CD14-positive monocyte (primary cell): ENCODE measurements at regions of chr17 and their contacts with region 1.

Region 1: DNA sequence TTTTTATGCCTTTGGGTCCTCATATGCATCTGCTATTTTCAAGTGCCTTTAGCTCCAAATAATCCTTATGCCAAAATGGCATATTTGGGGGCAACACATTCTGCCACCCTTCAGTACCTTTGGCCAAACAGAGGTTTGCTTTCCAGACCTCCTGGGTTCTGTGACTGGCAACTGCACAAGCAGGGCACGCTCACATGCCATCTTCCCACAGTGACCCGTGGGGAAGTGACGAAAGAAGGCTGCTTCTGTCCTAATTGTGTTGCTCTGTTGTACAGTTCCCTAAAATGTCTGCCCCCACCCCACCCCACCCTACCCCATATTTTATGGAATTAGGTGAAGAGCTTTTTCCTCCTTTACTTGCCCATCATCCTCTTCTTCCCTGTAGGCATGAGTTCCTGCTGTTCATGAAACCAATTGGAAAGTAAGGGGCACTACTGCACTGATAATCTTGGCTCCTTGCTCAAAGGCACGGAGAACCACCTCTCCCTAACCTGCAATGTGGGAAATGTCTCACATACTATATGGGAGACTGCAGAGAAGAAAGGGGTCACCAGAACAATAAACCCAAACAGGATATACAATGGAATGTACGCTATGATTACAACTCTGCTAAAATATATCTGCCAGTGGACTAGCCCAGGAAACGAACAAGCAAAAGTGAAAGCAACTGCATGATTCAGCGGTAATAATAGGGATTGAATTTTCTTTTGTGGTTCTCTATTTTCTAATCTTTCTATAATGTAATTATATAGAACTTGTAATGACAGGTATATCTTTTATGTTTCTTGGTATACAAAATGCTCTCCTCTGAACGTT is 3.3 kb upstream of the SLFN12L start:
- DNase-seq: peak; percentile 89 to 94 (median 94)
- H3K4me3 ChIP-seq: peak overlapping the region; percentile 83 to 100 (median 89)
- H3K4me3 Mint-ChIP-seq: peak overlapping the region; percentile 81 to 93
- H3K27ac ChIP-seq: peak overlapping the region; percentile 76 to 100
- H3K27ac Mint-ChIP-seq: peak overlapping the region; percentile 98 to 99 (median 99)
- H3K4me1 ChIP-seq: peaks cover 18 to 31% of the 10 kb centered on the region in 2 donors
- H3K4me1 Mint-ChIP-seq: peaks cover 35% of the 10 kb centered on the region
- H3K27me3 ChIP-seq: no peaks in the 10 kb centered on the region
- H3K27me3 Mint-ChIP-seq: peaks cover 0 to 1% (median 0%) of the 10 kb centered on the region in 3 donors
- CTCF ChIP-seq: no peak

Region 2: DNA sequence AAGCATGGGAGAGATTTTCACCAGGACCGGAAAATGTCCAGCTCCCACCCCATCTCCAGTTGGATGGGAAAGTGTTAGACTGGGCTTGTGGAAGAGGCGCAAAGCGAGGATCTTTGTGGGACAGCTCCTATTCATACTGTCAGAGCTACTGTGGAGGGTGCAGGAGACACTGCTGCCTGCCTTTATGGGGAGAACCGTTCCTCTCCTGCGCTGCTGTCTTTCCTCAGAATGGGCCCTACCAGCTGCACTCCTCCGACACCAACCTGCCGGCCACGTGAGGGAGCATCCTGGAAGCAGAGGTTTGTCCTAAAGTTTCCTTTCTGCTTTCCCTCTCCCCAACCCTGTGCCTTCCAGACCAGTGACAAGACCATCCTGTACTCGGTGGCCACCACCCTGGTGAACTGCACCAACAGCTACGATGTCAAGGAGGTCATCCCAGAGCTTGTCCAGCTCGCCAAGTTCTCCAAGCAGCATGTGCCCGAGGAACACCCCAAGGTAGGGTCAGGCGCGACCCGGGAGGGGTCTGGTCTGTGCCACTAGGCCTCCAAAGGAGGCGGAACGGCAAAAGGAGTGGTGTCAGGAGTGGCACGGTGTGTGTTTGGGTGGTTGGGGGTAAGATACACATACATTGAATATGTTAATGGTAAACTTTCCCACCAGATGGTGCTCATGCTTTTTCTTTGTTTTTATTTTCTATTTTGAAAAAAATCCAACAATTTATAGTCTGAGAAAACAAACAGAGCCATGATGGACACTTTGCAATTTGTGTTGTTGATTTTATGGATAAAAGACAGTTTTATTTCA is 369.6 kb before region 1 on chr17:
- intact Hi-C with region 1: loop called in 1 of 2 experiments (anchors 5 kb)
- DNase-seq: no peak
- H3K4me3 ChIP-seq: no peak overlapping the region
- H3K4me3 Mint-ChIP-seq: no peak overlapping the region
- H3K27ac ChIP-seq: no peak overlapping the region
- H3K27ac Mint-ChIP-seq: peak overlapping the region in 1 of 7 donors; percentile 44
- H3K4me1 ChIP-seq: no peaks in the 10 kb centered on the region
- H3K4me1 Mint-ChIP-seq: peaks cover 3% of the 10 kb centered on the region
- H3K27me3 ChIP-seq: no peaks in the 10 kb centered on the region
- H3K27me3 Mint-ChIP-seq: peaks cover 1 to 4% (median 4%) of the 10 kb centered on the region in 3 donors
- CTCF ChIP-seq: peak; percentile 36

Region 3: GRCh38 chr17:35242805-35243560 is 297.8 kb before region 1 on chr17 and contains the start of gene SLFN5:
- intact Hi-C with region 1: loop called in 1 of 2 experiments (anchors 5 kb)
- DNase-seq: peak; percentile 89 to 94 (median 92)
- H3K4me3 ChIP-seq: peak within 1 kb of the TSS; percentile 77 to 94 (median 86)
- H3K4me3 Mint-ChIP-seq: peak within 1 kb of the TSS; percentile 95 to 97
- H3K27ac ChIP-seq: peak within 1 kb of the TSS; percentile 94 to 97
- H3K27ac Mint-ChIP-seq: peak within 1 kb of the TSS; percentile 95 to 99 (median 97)
- H3K4me1 ChIP-seq: peaks cover 30 to 46% of the 10 kb centered on the region in 2 donors
- H3K4me1 Mint-ChIP-seq: peaks cover 41% of the 10 kb centered on the region
- H3K27me3 ChIP-seq: no peaks in the 10 kb centered on the region
- H3K27me3 Mint-ChIP-seq: peaks cover 11 to 15% (median 12%) of the 10 kb centered on the region in 3 donors
- CTCF ChIP-seq: no peak
- polyA plus RNA-seq, gene SLFN5: 2.9 to 8.8 (median 5.3) TPM

Region 4: DNA sequence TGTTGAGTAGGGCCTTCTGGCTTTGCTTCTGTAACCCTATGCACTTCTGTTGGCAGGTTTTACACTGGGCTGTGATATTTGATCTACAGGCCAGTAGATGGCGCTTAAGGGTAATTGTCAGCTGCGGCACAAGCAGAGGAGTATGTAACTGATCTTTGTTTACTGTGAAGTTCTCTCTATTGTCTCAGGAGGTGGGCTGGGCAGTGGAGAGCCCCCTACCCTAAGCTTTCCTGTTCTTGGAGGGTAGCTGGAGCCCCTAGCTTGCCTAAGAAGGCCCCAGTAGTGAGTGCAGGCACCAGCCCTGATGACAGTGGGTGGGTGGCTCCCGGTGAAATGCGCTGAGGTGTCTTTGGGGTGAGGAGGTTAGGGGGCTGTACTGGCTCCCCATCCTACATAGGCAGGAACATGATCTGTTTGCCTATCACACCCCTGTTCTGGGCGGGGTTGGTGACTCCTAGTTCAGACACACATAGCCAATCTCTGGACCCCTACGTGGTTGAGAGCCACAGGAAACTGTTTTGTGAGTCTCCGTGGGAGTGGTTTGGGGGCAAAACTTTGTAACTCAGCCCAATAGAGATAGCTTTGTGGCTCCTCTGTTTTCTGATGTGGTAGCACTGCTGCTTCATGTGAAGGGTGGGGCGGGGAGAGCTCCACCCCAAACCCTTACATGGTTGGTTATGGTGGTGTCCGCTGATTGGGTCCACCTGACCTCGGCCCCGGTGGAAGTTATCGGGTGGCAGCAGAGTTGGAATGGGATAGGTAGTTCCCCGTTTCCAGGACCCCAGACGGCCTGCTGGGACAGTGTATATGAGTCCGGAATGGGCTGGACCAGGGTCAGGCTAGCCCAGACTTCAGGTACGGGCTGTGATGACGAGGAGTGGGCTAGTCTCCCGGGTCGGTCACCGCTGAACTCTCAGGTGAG is 227.7 kb before region 1 on chr17:
- intact Hi-C with region 1: loop called (anchors 2 to 5 kb)
- DNase-seq: peak; percentile 66 to 77 (median 71)
- H3K4me3 ChIP-seq: peak overlapping the region; percentile 48 to 85 (median 56)
- H3K4me3 Mint-ChIP-seq: peak overlapping the region; percentile 93 to 95
- H3K27ac ChIP-seq: peak overlapping the region in 1 of 2 donors; percentile 86
- H3K27ac Mint-ChIP-seq: peak overlapping the region; percentile 43 to 92 (median 83)
- H3K4me1 ChIP-seq: peaks cover 18 to 26% of the 10 kb centered on the region in 2 donors
- H3K4me1 Mint-ChIP-seq: peaks cover 27% of the 10 kb centered on the region
- H3K27me3 ChIP-seq: no peaks in the 10 kb centered on the region
- H3K27me3 Mint-ChIP-seq: peaks cover 1 to 4% (median 3%) of the 10 kb centered on the region in 3 donors
- CTCF ChIP-seq: peak; percentile 84

Region 5: DNA sequence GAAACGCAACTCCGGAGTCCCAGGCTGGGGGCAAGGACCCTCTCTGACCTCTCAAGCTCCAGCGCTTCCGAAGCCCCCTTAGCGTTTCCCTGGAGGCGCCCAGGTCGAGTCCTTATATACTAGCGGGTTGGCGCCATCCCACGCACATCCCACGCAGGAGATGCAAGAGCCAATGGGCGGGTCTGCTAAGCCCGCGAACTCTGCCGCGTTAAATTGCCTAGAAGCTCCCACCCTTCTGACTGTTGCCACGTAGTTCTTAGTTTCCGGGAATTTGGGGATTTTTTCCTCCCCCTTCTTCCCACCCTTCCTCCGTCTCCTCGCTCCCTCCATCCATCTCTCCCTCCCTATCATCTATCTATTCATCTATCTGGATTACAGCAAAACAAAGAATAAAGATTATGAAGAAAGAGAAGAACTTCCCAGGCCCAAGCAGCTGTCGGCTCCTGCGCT is 167.2 kb before region 1 on chr17 and contains the start of gene SLFN11:
- intact Hi-C with region 1: loop called in 1 of 2 experiments (anchors 10 kb)
- DNase-seq: peak; percentile 68 to 88 (median 77)
- H3K4me3 ChIP-seq: peak within 1 kb of the TSS; percentile 77 to 94 (median 92)
- H3K4me3 Mint-ChIP-seq: peak within 1 kb of the TSS; percentile 98
- H3K27ac ChIP-seq: peak within 1 kb of the TSS; percentile 95 to 99
- H3K27ac Mint-ChIP-seq: peak within 1 kb of the TSS; percentile 98 to 100 (median 99)
- H3K4me1 ChIP-seq: peaks cover 61 to 90% of the 10 kb centered on the region in 2 donors
- H3K4me1 Mint-ChIP-seq: peaks cover 66% of the 10 kb centered on the region
- H3K27me3 ChIP-seq: no peaks in the 10 kb centered on the region
- H3K27me3 Mint-ChIP-seq: peaks cover 0 to 2% (median 0%) of the 10 kb centered on the region in 3 donors
- CTCF ChIP-seq: no peak
- polyA plus RNA-seq, gene SLFN11: 34.3 to 46.8 (median 45.6) TPM

Region 6: DNA sequence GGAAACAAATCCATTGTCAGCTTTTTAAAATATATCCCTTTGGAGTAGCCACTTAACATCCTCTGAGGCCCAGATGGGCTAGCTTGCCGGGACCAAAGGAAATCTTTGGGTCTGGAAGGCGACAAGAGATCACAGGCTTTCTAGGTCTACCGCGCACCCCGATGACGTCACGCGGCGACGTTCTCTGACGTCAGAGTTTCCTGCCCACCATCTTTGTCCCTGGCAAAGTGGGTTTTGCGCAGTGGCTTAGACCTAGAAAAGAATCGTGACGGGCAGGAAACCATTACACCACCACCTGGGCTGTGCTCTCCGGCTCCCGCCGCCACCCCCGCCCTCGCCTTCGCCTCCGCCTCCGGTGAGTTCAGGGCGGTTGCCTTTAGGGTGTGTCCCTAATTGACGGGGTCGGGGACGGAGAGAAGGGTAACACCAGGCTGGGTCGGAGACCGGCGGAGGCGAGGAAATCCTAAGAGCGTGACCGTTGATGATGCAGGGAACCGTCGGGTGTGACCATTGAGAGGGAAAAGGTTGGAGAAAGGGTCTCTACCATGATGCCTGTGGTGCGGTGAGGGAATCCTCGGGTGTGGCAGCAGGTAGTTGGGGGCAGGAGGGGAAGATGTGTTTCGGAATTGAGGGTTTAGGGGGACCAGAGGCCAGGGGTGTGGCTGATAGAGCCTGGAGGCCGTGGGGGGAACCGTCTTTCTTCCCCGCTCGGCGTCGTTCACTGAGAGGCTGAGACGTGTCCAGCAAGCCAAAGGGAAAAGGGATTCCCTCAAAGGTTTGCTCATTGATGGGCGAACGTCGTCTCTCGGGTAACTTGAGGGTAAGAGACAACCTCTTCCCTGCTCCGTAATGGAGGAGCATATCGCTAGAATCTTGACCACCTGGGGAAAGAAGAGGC is 46.5 kb after region 1 on chr17 and contains the start of gene AP2B1:
- intact Hi-C with region 1: loop called in 1 of 2 experiments (anchors 2 kb)
- DNase-seq: peak; percentile 97 to 98 (median 97)
- H3K4me3 ChIP-seq: peak within 1 kb of the TSS; percentile 83 to 100 (median 97)
- H3K4me3 Mint-ChIP-seq: peak within 1 kb of the TSS; percentile 98
- H3K27ac ChIP-seq: peak within 1 kb of the TSS; percentile 96 to 99
- H3K27ac Mint-ChIP-seq: peak within 1 kb of the TSS; percentile 96 to 100 (median 99)
- H3K4me1 ChIP-seq: peaks cover 23 to 39% of the 10 kb centered on the region in 2 donors
- H3K4me1 Mint-ChIP-seq: peaks cover 38% of the 10 kb centered on the region
- H3K27me3 ChIP-seq: no peaks in the 10 kb centered on the region
- H3K27me3 Mint-ChIP-seq: peaks cover 0 to 12% (median 3%) of the 10 kb centered on the region in 3 donors
- CTCF ChIP-seq: no peak
- polyA plus RNA-seq, gene AP2B1: 28.7 to 44.2 (median 29.4) TPM

Region 7: DNA sequence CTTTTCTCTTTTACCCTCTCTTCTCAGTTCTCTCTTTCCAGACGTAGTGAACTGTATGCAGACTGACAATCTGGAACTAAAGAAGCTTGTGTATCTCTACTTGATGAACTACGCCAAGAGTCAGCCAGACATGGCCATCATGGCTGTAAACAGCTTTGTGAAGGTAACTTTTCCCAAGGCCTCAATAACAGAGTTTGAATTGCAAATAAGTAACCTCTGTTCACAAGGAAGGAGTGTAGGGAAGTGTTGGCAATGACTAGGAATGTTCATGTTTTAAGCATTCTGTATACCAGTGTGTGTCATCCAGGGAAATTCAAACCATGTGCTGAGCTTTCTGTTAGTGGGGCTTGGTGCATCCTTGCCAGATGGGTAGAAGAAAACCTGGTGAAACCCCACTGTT is 64.9 kb after region 1 on chr17:
- intact Hi-C with region 1: no loop called
- DNase-seq: no peak
- H3K4me3 ChIP-seq: no peak overlapping the region
- H3K4me3 Mint-ChIP-seq: no peak overlapping the region
- H3K27ac ChIP-seq: no peak overlapping the region
- H3K27ac Mint-ChIP-seq: peak overlapping the region in 2 of 7 donors; percentile 32 to 53
- H3K4me1 ChIP-seq: no peaks in the 10 kb centered on the region
- H3K4me1 Mint-ChIP-seq: no peaks in the 10 kb centered on the region
- H3K27me3 ChIP-seq: no peaks in the 10 kb centered on the region
- H3K27me3 Mint-ChIP-seq: no peaks in the 10 kb centered on the region
- CTCF ChIP-seq: no peak

Region 8: GRCh38 chr17:35808962-35809854 is 268.4 kb after region 1 on chr17 and contains the start of gene TAF15:
- intact Hi-C with region 1: loop called in 1 of 2 experiments (anchors 10 kb)
- DNase-seq: peak; percentile 97 to 99 (median 98)
- H3K4me3 ChIP-seq: peak within 1 kb of the TSS; percentile 56 to 92 (median 90)
- H3K4me3 Mint-ChIP-seq: peak within 1 kb of the TSS; percentile 96 to 99
- H3K27ac ChIP-seq: peak within 1 kb of the TSS; percentile 91 to 92
- H3K27ac Mint-ChIP-seq: peak within 1 kb of the TSS; percentile 92 to 99 (median 97)
- H3K4me1 ChIP-seq: peaks cover 28 to 44% of the 10 kb centered on the region in 2 donors
- H3K4me1 Mint-ChIP-seq: peaks cover 45% of the 10 kb centered on the region
- H3K27me3 ChIP-seq: no peaks in the 10 kb centered on the region
- H3K27me3 Mint-ChIP-seq: no peaks in the 10 kb centered on the region
- CTCF ChIP-seq: peak; percentile 62
- polyA plus RNA-seq, gene TAF15: 6.0 to 50.6 (median 16.3) TPM